Dorsolateral prefrontal cortex (tissue), 120 donors: ENCODE measurements at regions of chrX and their contacts with region 1.

Region 1: GRCh38 chrX:1391707-1392375 is at the start of gene SLC25A6:
- DNase-seq: peak; percentile 98 to 100 (median 99)
- H3K4me3 ChIP-seq: peak within 1 kb of the TSS; percentile 68 to 100 (median 99)
- H3K27ac ChIP-seq: peak within 1 kb of the TSS; percentile 73 to 100 (median 97)
- H3K27me3 ChIP-seq: no peaks in the 10 kb centered on the region
- CTCF ChIP-seq: peak in 9 of 56 donors; percentile 6 to 28 (median 15)
- total RNA-seq, gene SLC25A6: 158 to 287 (median 202) TPM

Region 2: GRCh38 chrX:1468250-1468772 is 76.5 kb after region 1 on chrX:
- intact Hi-C with region 1: no loop called
- DNase-seq: peak in 2 of 10 donors; percentile 18 to 28
- H3K4me3 ChIP-seq: no peak overlapping the region
- H3K27ac ChIP-seq: no peak overlapping the region
- H3K27me3 ChIP-seq: peaks cover 0 to 79% (median 60%) of the 10 kb centered on the region in 45 donors
- CTCF ChIP-seq: no peak

Region 3: DNA sequence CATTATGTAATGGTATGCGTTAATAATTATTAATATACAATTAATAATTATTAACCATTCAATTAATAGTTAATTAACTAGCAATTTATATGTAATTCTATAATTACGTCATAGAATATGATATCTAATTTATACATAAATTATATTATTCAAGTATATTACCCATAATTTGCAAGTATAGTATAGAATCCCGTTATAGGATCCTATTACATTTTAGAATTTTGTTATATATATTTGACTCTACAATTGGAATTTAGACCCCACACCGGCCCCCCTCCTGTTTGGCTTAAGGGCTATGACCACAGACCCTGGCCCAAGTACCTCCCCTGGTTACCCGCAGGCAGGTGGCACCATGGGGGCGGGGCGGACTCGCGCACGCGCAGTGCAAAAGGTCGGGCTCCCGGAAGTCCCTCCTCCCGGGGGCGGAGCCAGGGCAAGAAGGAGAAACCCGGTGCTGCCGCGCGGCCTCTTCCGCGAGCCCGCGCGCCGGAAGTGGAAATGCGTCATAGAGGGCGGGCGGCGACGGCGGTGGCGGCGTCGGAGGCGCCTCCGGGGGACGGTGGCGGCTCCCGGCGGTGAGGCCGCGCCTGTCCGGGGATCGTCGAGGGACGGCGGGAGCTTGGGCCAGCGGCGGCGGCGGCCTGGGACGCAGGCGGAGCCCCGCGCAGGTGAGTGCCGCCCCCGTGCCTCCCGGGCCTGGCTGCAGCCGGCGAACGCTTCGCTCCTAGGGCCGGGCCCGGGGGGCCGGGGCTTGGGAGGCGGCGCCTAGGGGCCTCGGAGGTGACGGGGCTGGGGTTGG is 199.5 kb after region 1 on chrX and contains the start of gene AKAP17A:
- intact Hi-C with region 1: loop called (anchors 5 to 10 kb)
- DNase-seq: peak; percentile 92 to 100 (median 96)
- H3K4me3 ChIP-seq: peak within 1 kb of the TSS; percentile 53 to 91 (median 75)
- H3K27ac ChIP-seq: peak within 1 kb of the TSS in 43 of 59 donors; percentile 7 to 86 (median 63)
- H3K27me3 ChIP-seq: no peaks in the 10 kb centered on the region
- CTCF ChIP-seq: peak in 47 of 56 donors; percentile 15 to 66 (median 45)
- total RNA-seq, gene AKAP17A: 16.7 to 45.7 (median 25.2) TPM

Region 4: GRCh38 chrX:1754077-1754476 is 362.2 kb after region 1 on chrX:
- intact Hi-C with region 1: no loop called
- DNase-seq: no peak
- H3K4me3 ChIP-seq: no peak overlapping the region
- H3K27ac ChIP-seq: no peak overlapping the region
- H3K27me3 ChIP-seq: peaks cover 0 to 17% (median 0%) of the 10 kb centered on the region in 45 donors
- CTCF ChIP-seq: no peak